BJ (cell line): ENCODE measurements at regions of chr3 and their contacts with region 1.

Region 1: DNA sequence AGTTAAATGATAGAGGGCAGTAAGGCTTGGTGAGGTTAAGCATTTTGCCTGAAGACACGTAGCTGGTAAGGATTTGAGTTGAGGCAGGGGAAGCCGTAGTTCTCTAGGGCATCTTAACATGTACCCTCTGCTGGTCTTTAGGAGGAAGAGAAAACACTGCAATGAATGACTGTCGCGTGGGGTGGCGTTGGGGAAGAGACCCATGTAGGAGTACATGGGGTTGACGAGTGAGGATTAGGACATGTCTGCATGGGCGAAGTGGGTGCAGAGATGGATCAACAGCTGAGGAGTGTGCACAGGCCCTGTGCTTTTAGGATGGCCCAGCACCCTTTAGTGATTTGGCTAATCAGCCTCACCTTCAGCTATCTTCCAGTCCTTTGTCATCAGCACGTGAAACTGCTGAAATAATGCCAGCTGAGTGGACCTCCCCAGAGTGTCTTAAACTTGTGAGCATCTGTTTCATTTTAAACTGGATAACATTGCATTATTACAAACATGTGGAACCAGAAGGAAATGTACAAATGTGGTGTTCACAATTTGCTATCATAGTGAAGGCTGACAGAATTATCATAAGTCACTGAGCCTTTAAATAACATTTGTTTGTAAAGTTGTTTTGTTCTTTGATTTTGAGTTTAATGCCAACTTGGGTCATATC is 15.3 kb downstream of the P2RY14 start:
- DNase-seq: peak; percentile 25
- H3K4me3 ChIP-seq: no peak overlapping the region
- H3K27me3 ChIP-seq: no peaks in the 10 kb centered on the region
- CTCF ChIP-seq: no peak

Region 2: DNA sequence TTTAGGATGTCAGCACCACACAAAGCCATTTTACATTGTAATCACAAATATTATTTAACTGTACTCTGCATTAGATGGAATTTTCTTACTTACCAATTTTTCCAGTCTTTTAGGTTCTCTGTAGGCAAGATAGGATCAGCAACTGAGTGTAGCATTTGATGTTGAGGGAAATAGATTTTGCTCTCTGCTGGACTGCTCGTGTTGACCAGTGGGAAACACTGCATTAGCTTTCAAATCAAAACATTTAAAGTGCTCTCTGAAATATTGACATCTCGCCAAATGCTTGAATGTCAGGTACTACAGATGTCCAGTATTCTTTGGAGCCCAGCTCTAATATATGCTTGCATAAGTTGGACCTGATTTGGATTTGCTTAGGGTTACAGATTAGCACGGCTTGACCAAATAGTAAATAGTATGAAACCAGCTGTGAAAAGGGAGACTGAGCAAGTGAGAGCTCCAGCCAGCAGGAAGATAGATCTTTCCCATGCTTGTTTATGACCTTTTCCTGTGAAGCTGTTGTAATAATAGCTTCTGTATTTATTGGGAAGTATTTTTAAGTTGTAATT is 14.1 kb before region 1 on chr3:
- CTCF ChIA-PET with region 1: interaction called, 10 read pairs
- POLR2A ChIA-PET with region 1: no interaction called
- DNase-seq: no peak
- H3K4me3 ChIP-seq: no peak overlapping the region
- H3K27me3 ChIP-seq: peaks cover 1% of the 10 kb centered on the region
- CTCF ChIP-seq: no peak